T-cell (primary cell): ENCODE measurements at regions of chr13 and their contacts with region 1.

Region 1: GRCh38 chr13:30465585-30466357 is at the start of gene HMGB1:
- DNase-seq: peak; percentile 87 to 99 (median 97)
- ATAC-seq: peak; percentile 83 to 89 (median 86)
- H3K4me3 ChIP-seq: peak within 1 kb of the TSS; percentile 55 to 68
- H3K4me3 Mint-ChIP-seq: peak within 1 kb of the TSS; percentile 88 to 95 (median 89)
- H3K27ac ChIP-seq: peak within 1 kb of the TSS; percentile 67
- H3K27ac Mint-ChIP-seq: peak within 1 kb of the TSS; percentile 97 to 99
- H3K4me1 ChIP-seq: peaks cover 14 to 22% of the 10 kb centered on the region in 2 experiments
- H3K4me1 Mint-ChIP-seq: peaks cover 27 to 41% (median 30%) of the 10 kb centered on the region in 3 donors
- H3K27me3 ChIP-seq: no peaks in the 10 kb centered on the region
- H3K27me3 Mint-ChIP-seq: peaks cover 0 to 2% of the 10 kb centered on the region in 2 donors
- total RNA-seq, gene HMGB1: 290 to 406 (median 300) TPM

Region 2: DNA sequence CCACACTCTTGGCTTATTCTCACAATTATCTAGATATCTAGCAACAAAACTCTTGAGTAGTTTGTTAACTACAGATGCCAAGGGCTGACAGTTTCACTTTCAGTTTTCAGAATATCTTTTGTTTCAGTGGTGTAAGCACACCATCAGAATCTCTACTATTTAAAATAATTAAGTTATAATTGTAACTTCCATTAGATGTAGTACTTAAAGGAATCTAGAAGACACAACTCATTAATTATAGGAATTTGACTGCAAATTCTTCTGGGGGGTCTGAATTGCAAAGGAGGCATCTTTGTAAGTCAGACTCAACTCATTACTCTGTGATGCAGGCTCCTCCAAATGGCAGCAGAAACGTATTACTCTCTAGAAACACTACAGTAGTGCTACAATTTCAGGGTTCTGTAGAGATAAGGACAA is 107.1 kb after region 1 on chr13:
- CTCF ChIA-PET with region 1: no interaction called
- POLR2A ChIA-PET with region 1: interaction called in 1 of 2 experiments, 10 read pairs
- DNase-seq: peak in 12 of 35 experiments; percentile 6 to 63 (median 18)
- ATAC-seq: peak; percentile 71 to 75 (median 72)
- H3K4me3 ChIP-seq: peak overlapping the region; percentile 38 to 44
- H3K4me3 Mint-ChIP-seq: peak overlapping the region; percentile 69 to 78 (median 71)
- H3K27ac ChIP-seq: peak overlapping the region; percentile 90
- H3K27ac Mint-ChIP-seq: peak overlapping the region; percentile 93 to 95
- H3K4me1 ChIP-seq: peaks cover 11 to 17% of the 10 kb centered on the region in 2 experiments
- H3K4me1 Mint-ChIP-seq: peaks cover 29 to 39% (median 39%) of the 10 kb centered on the region in 3 donors
- H3K27me3 ChIP-seq: no peaks in the 10 kb centered on the region
- H3K27me3 Mint-ChIP-seq: no peaks in the 10 kb centered on the region